A673 (cell line): ENCODE measurements at regions of chr1 and their contacts with region 1.

Region 1: GRCh38 chr1:119008483-119009311 is 20.6 kb upstream of the TBX15 start:
- DNase-seq: peak; percentile 71
- H3K4me3 ChIP-seq: peak overlapping the region; percentile 14
- H3K27ac ChIP-seq: no peak overlapping the region
- H3K4me1 ChIP-seq: no peaks in the 10 kb centered on the region
- H3K27me3 ChIP-seq: peaks cover 36% of the 10 kb centered on the region
- CTCF ChIP-seq: peak; percentile 70

Region 2: DNA sequence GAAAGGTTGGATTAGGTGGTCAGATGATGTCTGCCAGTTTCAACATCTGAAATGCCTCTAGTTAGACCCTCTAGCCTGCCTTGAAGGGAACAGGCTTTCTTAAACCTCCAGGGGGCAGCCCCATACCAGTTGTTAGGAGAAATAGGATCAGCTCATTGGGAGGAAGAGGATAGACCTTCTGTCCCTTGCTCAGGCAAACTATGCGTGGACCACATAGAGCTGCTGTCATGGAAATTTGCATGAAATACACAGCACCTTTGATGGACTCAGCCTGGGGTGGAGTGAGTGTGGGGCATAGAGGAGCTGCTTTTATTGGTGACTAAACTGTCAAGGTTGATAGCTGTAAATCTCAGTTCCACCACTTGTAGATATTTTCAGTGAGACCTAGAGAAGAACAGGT is 785.3 kb before region 1 on chr1:
- CTCF ChIA-PET with region 1: no interaction called
- POLR2A ChIA-PET with region 1: no interaction called
- intact Hi-C with region 1: loop called (anchors 5 kb)
- DNase-seq: peak; percentile 64
- H3K4me3 ChIP-seq: no peak overlapping the region
- H3K27ac ChIP-seq: no peak overlapping the region
- H3K4me1 ChIP-seq: no peaks in the 10 kb centered on the region
- H3K27me3 ChIP-seq: no peaks in the 10 kb centered on the region
- CTCF ChIP-seq: peak; percentile 58

Region 3: DNA sequence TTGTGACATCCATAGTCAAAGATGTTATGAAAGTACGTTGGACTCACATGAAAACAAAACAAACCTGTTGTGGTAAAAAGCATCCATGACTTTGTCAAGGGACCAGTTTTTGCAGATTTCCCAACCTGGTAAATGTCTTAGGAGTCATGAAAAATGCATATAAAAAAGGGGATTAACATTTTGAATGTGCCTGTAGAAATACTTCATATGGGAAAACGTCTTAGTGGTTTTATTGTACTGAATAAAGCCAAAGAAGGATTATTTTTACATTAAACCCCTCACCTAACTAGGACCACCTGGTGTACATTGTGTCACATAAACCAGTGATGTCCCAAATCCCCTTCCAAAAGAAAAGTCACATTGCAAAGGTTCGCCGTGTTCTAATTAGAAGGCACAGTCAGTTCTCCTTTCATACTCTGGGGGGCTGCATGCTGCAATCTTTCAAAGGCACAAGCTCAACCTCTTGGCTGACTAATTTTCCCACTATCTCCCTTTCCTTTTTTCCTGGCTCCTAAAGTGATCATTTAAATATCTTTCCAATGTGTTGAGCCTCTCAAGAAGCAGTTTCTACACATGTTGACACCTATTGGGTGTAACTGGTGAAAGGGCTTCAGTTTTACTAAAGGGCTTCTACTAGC is 703.9 kb before region 1 on chr1:
- CTCF ChIA-PET with region 1: interaction called, 6 read pairs
- POLR2A ChIA-PET with region 1: no interaction called
- intact Hi-C with region 1: loop called (anchors 5 kb)
- DNase-seq: peak; percentile 45
- H3K4me3 ChIP-seq: no peak overlapping the region
- H3K27ac ChIP-seq: no peak overlapping the region
- H3K4me1 ChIP-seq: no peaks in the 10 kb centered on the region
- H3K27me3 ChIP-seq: no peaks in the 10 kb centered on the region
- CTCF ChIP-seq: peak; percentile 63